ENCODE measurements at regions of chr15 and their contacts with region 1.

Region 1: GRCh38 chr15:64046347-64047153 is at the start of gene DAPK2:
- DNase-seq: no peak
- H3K4me3 ChIP-seq: peak within 1 kb of the TSS; percentile 49 to 72 (median 60)
- H3K27ac ChIP-seq: peak within 1 kb of the TSS in 3 of 4 donors; percentile 53 to 70 (median 55)
- H3K4me1 ChIP-seq: peaks cover 3 to 26% (median 10%) of the 10 kb centered on the region in 3 donors
- H3K27me3 ChIP-seq: peaks cover 0 to 18% (median 0%) of the 10 kb centered on the region in 4 donors
- CTCF ChIP-seq: peak; percentile 66 to 92 (median 86)
- POLR2A ChIP-seq: no peak
- total RNA-seq, gene DAPK2: 1.9 to 12.9 (median 9.8) TPM

Region 2: DNA sequence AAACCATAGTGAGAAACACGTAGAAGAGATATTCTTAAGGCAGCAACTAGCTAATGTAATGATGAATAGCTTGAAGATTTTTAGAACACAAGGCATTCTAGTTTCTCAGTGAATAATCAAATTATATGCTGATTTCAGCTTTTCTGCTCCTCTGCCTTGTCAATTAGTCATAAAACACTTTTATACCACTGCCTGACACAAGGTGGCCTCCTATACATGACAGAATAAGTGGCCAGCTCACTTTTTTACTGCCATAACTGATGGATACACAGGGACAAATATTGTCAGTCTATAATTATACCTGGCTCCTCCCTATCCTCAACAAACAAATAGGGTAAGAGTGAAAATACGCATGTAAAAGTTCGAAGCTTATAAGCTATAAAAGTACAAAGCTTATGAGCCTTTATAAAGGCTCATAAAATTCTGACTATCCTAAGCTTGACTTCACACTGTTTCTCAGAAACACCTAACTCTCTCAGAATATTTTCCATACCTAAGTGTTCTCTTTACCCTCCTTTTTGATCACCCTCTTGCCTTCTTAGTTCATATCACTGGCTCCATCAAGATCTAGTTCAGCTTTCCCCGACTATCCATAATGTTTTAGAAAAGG is 294.4 kb before region 1 on chr15:
- intact Hi-C with region 1: no loop called
- DNase-seq: no peak
- H3K4me3 ChIP-seq: no peak overlapping the region
- H3K27ac ChIP-seq: no peak overlapping the region
- H3K4me1 ChIP-seq: no peaks in the 10 kb centered on the region
- H3K27me3 ChIP-seq: no peaks in the 10 kb centered on the region
- CTCF ChIP-seq: peak; percentile 49 to 87 (median 78)
- POLR2A ChIP-seq: no peak

Region 3: DNA sequence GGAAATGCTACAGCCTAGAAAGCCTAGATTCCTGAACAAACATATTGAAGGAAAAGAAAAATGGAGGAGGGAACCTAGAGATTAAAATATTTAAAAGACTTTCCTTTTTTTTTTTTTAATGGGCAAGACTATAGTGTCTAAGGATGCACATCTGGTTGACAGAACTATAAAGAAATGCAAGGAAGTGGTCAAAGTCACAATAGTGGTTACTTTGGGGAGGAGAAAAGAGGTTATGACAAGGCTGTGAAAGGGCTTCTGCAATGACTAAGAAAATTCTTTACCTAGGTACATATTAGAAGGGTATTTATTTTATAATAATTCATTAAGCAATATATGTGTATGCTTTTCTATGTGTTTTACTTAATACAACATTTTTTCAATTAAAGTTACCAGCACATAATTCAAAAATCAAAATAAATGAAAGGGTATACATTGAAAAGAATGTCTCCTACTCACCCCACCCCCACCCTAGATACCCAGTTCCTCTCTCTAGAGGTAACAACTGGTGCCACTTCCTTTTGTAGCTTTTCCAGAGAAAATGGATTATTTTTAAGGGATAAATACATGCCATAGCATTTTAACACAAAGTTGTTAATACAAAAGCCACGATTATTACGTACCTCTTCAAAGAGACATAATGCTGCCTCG is 282.9 kb before region 1 on chr15:
- intact Hi-C with region 1: loop called (anchors 10 kb)
- DNase-seq: no peak
- H3K4me3 ChIP-seq: no peak overlapping the region
- H3K27ac ChIP-seq: no peak overlapping the region
- H3K4me1 ChIP-seq: peaks cover 0 to 16% (median 0%) of the 10 kb centered on the region in 3 donors
- H3K27me3 ChIP-seq: no peaks in the 10 kb centered on the region
- CTCF ChIP-seq: no peak
- POLR2A ChIP-seq: no peak

Region 4: DNA sequence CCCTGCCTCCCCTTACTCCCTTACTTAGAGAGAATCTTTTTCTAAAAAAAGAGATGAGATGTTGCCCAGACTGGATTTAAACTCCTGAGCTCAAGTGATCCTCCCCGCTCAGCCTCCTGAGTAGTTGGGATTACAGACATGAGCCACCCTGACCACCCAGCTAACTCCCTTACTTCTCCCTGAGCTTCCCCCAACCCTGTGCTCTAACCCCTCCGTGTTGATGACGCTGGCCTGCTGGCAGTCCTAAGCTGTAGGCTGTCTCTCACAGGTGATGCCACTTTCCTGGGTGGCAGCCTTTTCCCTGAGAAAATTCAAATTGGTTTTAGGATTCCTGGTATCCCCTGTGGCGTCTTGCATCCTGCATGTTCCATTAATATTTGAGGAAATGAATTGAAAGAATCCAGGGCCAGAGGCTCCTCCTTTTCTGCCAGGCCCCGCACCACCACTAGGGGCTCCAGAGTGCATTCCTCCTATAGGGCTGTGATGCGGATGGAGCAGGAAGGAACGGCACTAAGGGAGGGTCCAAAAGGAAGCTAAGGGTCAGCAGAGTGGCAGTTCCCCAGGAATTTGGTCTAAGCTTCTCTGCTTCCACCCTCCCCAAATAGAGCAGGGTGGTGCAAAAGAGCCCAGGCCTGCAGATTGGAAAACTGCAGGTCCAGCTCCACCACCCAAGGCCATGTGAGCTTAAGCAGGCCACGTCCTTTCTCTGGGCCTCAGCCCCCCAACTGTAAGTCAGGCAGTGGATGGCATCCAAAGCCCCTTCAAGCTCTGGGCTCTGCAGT is 101.4 kb before region 1 on chr15:
- intact Hi-C with region 1: loop called (anchors 5 kb)
- DNase-seq: peak; percentile 9
- H3K4me3 ChIP-seq: peak overlapping the region in 1 of 4 donors; percentile 18
- H3K27ac ChIP-seq: peak overlapping the region in 3 of 4 donors; percentile 13 to 66 (median 54)
- H3K4me1 ChIP-seq: peaks cover 6 to 27% (median 9%) of the 10 kb centered on the region in 3 donors
- H3K27me3 ChIP-seq: no peaks in the 10 kb centered on the region
- CTCF ChIP-seq: peak; percentile 87 to 96 (median 93)
- POLR2A ChIP-seq: no peak

Region 5: DNA sequence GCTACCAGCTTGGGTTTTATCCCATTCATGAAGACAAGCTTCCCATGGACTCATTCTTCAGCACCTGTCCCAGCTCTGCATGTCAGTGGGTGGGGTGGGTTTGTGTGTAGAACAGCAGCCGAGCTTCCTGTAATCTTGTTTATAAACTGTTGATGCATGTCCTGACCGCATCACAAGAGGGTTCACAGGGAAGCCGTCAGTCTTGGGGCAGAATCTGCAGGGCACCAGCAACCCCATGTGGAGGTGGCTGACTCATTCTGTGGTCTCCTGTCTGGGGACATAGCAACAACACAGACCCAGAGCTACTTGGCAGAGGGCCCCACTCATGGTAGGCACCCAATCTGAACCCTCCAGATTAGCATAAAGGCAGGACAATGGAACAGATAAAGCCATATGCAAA is 35.8 kb before region 1 on chr15:
- intact Hi-C with region 1: no loop called
- DNase-seq: peak; percentile 54
- H3K4me3 ChIP-seq: no peak overlapping the region
- H3K27ac ChIP-seq: peak overlapping the region; percentile 78 to 84 (median 82)
- H3K4me1 ChIP-seq: peaks cover 7 to 78% (median 45%) of the 10 kb centered on the region in 3 donors
- H3K27me3 ChIP-seq: no peaks in the 10 kb centered on the region
- CTCF ChIP-seq: no peak
- POLR2A ChIP-seq: peak in 1 of 4 donors; percentile 53

Measured in esophagus squamous epithelium (tissue), 5 donors.